ENCODE measurements at regions of chr15 and their contacts with region 1.

Region 1: GRCh38 chr15:55457401-55458022 is 49.2 kb downstream of the PIERCE2 start:
- DNase-seq: no peak
- ATAC-seq: no peak
- H3K4me3 ChIP-seq: no peak overlapping the region
- H3K27ac ChIP-seq: no peak overlapping the region
- H3K4me1 ChIP-seq: no peaks in the 10 kb centered on the region
- H3K27me3 ChIP-seq: no peaks in the 10 kb centered on the region
- CTCF ChIP-seq: no peak
- EP300 ChIP-seq: no peak
- POLR2A ChIP-seq: no peak
- RAD21 ChIP-seq: no peak

Region 2: GRCh38 chr15:55518641-55519040 is 61.1 kb after region 1 on chr15:
- CTCF ChIA-PET with region 1: no interaction called
- POLR2A ChIA-PET with region 1: no interaction called
- RAD21 ChIA-PET with region 1: no interaction called
- SMC1A ChIA-PET with region 1: no interaction called
- in situ Hi-C with region 1: no loop called
- intact Hi-C with region 1: loop called (anchors 10 kb)
- DNase-seq: no peak
- ATAC-seq: no peak
- H3K4me3 ChIP-seq: no peak overlapping the region
- H3K27ac ChIP-seq: no peak overlapping the region
- H3K4me1 ChIP-seq: no peaks in the 10 kb centered on the region
- H3K27me3 ChIP-seq: no peaks in the 10 kb centered on the region; a peak in 1 of 4 replicates
- CTCF ChIP-seq: 0 out of 6 replicates have a peak, but pooled peaks of 1 of the 3 experiments have one; percentile 12
- EP300 ChIP-seq: no peak
- POLR2A ChIP-seq: no peak
- RAD21 ChIP-seq: no peak

Measured in GM12878 (cell line).